Sciatic nerve (tissue), 2 donors: ENCODE measurements at regions of chr18 and their contacts with region 1.

Region 1: GRCh38 chr18:2932247-2933181 is 80.4 kb downstream of the LPIN2 start:
- DNase-seq: no peak
- ATAC-seq: peak; percentile 70

Region 2: DNA sequence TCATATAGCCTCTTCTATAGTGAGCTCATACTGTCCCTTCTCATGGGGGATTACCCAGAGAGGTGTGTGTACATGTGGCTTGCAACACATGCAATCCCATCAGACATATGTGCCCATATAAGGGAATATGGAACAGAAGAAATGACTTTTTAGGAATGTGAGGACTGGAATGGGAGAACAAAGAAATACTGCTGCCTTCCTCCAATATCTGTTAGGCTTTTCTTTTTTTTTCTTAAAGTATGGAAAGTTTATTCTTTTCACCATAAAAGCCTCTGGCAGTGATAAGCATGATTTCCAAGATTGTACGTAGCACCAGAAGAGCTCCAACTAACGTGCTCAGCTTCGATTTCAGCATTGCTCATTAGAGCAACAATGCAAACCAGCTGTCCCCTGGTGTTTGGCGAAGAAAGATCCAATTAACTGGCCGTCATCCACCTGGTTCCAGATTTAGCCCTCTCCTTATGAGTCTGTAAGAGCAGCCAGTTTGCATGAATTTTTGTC is 1914.3 kb before region 1 on chr18:
- intact Hi-C with region 1: no loop called
- DNase-seq: no peak
- ATAC-seq: no peak

Region 3: DNA sequence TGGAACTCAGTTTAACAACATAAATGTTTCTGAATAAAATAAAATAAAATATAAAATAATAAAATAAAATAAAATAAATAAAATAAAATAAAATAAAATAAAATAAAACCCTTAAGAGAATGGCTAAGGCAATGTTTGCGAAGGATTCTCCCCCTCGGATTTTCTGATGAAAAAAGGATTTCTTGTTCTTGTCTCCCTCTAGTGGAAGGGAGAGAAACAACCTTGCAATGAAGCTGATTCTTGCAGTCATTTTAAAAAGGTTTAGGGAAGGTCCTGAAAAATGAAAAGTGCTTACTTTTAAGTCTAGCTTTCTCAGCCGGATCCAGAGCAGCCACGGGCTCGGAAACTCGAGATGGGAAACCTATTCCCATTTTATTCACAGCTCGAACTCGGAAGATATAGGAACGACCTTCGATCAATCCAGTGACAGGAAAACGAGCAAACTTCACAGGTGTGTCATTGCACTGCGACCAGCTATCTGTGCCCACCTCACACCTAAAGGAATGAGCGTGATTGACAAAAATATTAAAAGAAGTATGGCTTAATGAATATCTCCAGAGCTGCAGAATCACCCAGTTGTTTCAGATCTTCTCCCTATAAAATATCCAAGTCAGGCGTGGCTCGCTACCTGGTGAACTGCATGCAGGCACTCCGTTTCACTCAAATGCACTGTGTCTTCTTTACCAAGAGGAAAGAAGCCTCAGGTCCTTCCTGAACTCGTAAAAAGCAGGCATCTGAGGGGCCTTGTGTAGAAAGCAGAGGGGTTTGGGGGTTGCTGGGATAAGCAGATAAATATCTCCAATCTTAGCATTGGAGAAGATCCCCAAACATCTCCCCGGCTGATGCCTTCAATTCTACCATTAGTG is 219.1 kb after region 1 on chr18:
- intact Hi-C with region 1: loop called (anchors 5 kb)
- DNase-seq: no peak
- ATAC-seq: no peak

Region 4: GRCh38 chr18:3245853-3246634 is 313.5 kb after region 1 on chr18:
- intact Hi-C with region 1: loop called (anchors 2 kb)
- DNase-seq: peak; percentile 92
- ATAC-seq: peak; percentile 88